Caco-2 (cell line): ENCODE measurements at regions of chr12 and their contacts with region 1.

Region 1: DNA sequence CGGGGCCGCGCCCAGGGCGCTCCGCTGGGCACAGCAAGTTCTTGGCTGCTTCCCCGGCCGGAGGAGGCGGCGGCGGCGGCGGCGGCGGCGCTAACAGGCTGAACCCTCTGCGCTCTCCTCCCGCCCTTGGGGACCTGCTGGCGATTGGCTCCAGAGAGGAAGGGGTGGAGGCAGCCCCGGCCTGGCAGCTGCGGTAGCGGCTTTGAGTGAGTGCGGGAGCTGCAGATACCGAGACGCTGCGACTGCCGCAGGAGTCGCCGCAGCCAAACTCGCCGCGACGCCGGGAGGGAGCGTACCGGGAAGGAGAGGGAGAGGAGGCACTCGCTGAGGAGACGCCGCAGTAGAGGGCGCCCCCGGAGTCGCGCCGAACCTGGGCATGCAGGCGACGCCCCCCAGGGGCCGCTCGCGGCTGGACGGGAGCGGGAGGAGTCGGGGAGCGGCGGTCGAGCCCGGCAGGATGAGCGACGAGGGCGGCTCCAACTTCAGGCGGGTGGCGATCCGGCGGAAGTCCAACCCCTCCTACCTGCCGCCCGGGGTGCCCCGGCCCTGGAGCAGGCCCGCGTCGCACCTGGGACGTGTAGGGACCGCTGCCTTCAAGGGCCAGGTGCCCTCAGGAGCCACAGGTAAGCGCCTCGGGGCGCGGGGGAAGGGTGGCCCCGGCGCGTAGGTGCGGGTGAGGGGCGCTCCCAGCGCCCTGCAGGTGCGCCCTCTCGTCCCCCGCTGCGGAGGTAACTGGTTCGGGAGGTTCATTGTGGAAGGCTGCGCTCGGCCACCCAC is at the start of gene FGD4:
- DNase-seq: peak; percentile 96 to 97
- H3K4me3 ChIP-seq: peak within 1 kb of the TSS; percentile 93
- H3K4me3 Mint-ChIP-seq: peak within 1 kb of the TSS; percentile 86
- H3K27ac Mint-ChIP-seq: peak within 1 kb of the TSS; percentile 87
- H3K4me1 ChIP-seq: peaks cover 13% of the 10 kb centered on the region
- H3K4me1 Mint-ChIP-seq: peaks cover 14% of the 10 kb centered on the region
- H3K27me3 ChIP-seq: no peaks in the 10 kb centered on the region
- H3K27me3 Mint-ChIP-seq: no peaks in the 10 kb centered on the region
- CTCF ChIP-seq: peak; percentile 68 to 86
- total RNA-seq, gene FGD4: 31.6 and 34.3 TPM in 2 replicates

Region 2: DNA sequence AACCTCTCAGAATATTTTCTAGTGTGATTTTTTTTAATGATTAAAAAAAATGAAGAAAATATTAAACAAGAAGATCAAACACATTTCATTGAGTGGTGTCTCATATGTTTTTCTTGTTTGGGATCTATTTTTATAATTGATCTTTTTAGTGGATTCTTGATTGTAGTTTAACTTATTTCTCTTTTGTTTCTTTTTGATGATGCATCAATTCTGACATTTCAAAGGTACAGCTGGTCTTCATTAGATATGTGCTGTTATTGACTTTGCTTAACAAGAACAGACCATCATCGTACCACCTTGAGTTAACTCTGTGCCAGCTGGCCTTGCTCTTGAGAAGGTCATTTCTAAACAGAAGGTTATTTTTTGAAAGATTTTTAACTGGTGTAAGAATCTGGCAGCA is 46.0 kb before region 1 on chr12:
- CTCF ChIA-PET with region 1: no interaction called
- POLR2A ChIA-PET with region 1: no interaction called
- intact Hi-C with region 1: no loop called
- DNase-seq: no peak
- H3K4me3 ChIP-seq: no peak overlapping the region
- H3K4me3 Mint-ChIP-seq: no peak overlapping the region
- H3K27ac Mint-ChIP-seq: no peak overlapping the region
- H3K4me1 ChIP-seq: no peaks in the 10 kb centered on the region
- H3K4me1 Mint-ChIP-seq: no peaks in the 10 kb centered on the region
- H3K27me3 ChIP-seq: no peaks in the 10 kb centered on the region
- H3K27me3 Mint-ChIP-seq: no peaks in the 10 kb centered on the region
- CTCF ChIP-seq: no peak

Region 3: GRCh38 chr12:32444895-32445294 is 45.4 kb after region 1 on chr12:
- CTCF ChIA-PET with region 1: no interaction called
- POLR2A ChIA-PET with region 1: interaction called, 4 read pairs
- intact Hi-C with region 1: loop called (anchors 1 kb)
- DNase-seq: peak; percentile 66 to 68
- H3K4me3 ChIP-seq: no peak overlapping the region
- H3K4me3 Mint-ChIP-seq: peak overlapping the region; percentile 57
- H3K27ac Mint-ChIP-seq: peak overlapping the region; percentile 94
- H3K4me1 ChIP-seq: peaks cover 59% of the 10 kb centered on the region
- H3K4me1 Mint-ChIP-seq: peaks cover 68% of the 10 kb centered on the region
- H3K27me3 ChIP-seq: no peaks in the 10 kb centered on the region
- H3K27me3 Mint-ChIP-seq: no peaks in the 10 kb centered on the region
- CTCF ChIP-seq: no peak

Region 4: DNA sequence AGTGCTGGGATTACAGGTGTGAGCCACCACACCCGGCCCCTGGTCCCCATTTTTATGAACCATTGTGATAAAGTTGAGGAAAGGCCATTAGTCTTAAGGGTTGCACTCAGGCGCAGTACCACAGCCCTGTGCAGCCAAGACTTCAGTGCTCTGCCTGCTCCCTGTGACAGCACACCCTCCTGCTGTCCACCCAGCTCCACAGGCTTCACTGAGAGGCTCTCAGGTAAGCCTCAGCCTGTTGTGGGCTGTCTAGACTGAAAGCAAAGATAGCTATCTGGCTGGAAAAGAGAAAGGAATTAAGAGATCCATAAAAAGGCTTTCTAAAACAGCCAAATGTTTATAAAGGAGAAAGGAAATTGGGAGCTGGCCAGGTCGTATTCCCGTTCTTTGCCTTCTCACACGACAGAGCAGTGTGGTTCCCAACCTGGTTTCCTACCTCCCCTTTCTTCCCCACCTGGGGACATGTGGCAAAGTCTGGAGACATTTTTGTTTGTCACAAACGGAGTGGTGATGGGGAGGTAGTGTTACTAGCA is 260.4 kb after region 1 on chr12:
- CTCF ChIA-PET with region 1: no interaction called
- POLR2A ChIA-PET with region 1: no interaction called
- intact Hi-C with region 1: loop called (anchors 1 kb)
- DNase-seq: peak in 1 of 2 experiments; percentile 27
- H3K4me3 ChIP-seq: no peak overlapping the region
- H3K4me3 Mint-ChIP-seq: no peak overlapping the region
- H3K27ac Mint-ChIP-seq: no peak overlapping the region
- H3K4me1 ChIP-seq: no peaks in the 10 kb centered on the region
- H3K4me1 Mint-ChIP-seq: no peaks in the 10 kb centered on the region
- H3K27me3 ChIP-seq: no peaks in the 10 kb centered on the region
- H3K27me3 Mint-ChIP-seq: no peaks in the 10 kb centered on the region
- CTCF ChIP-seq: no peak

Region 5: GRCh38 chr12:32679091-32679919 is 279.8 kb after region 1 on chr12 and contains the start of gene DNM1L:
- CTCF ChIA-PET with region 1: interaction called, 3 read pairs
- POLR2A ChIA-PET with region 1: no interaction called
- intact Hi-C with region 1: loop called (anchors 1 kb)
- DNase-seq: peak; percentile 99
- H3K4me3 ChIP-seq: peak within 1 kb of the TSS; percentile 86
- H3K4me3 Mint-ChIP-seq: peak within 1 kb of the TSS; percentile 97
- H3K27ac Mint-ChIP-seq: peak within 1 kb of the TSS; percentile 95
- H3K4me1 ChIP-seq: peaks cover 22% of the 10 kb centered on the region
- H3K4me1 Mint-ChIP-seq: peaks cover 19% of the 10 kb centered on the region
- H3K27me3 ChIP-seq: no peaks in the 10 kb centered on the region
- H3K27me3 Mint-ChIP-seq: no peaks in the 10 kb centered on the region
- CTCF ChIP-seq: peak in 1 of 2 experiments; percentile 18
- total RNA-seq, gene DNM1L: 136 and 137 TPM in 2 replicates